ENCODE measurements at regions of chr10 and their contacts with region 1.

Region 1: DNA sequence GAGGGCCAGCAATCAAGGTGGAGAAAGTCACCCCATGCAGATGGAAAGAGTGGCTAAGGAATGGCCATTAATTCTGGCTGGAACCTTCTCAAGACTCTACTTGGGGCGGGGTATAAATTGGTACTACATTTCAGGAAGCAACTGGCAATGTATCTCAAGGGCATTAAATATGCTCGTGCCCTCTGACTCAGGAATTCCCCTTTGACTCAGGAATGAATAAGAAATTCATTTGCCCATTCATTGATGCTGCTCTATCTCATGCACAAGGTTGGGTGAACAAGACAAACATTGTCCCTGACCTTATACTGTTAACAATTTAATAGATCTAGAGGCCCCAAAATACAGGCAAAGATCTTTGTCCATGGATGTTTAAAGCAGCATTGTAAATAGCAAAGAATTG is 188.1 kb downstream of the MYOF start:
- DNase-seq: peak; percentile 60
- H3K4me3 ChIP-seq: no peak overlapping the region
- H3K27ac ChIP-seq: no peak overlapping the region
- H3K4me1 ChIP-seq: peaks cover 8% of the 10 kb centered on the region
- H3K27me3 ChIP-seq: no peaks in the 10 kb centered on the region
- CTCF ChIP-seq: no peak

Region 2: DNA sequence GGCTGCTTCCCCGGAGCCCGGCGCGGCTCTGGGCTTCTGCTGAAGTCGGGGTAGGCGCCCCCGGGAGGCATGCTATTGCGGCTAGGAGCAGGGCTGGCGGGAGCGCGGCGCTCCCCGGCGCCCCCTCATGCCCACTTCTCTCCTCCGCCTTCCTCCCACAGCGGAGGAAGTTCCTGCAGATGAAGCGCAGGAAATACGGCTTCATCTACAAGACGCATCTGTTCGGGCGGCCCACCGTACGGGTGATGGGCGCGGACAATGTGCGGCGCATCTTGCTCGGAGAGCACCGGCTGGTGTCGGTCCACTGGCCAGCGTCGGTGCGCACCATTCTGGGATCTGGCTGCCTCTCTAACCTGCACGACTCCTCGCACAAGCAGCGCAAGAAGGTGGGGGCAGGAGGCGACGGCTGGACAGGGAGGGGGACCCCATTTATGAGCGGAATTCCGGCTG is 219.8 kb before region 1 on chr10:
- CTCF ChIA-PET with region 1: no interaction called
- dilution Hi-C with region 1: loop called (anchors 10 kb)
- in situ Hi-C with region 1: loop called in 1 of 2 experiments (anchors 5 kb)
- intact Hi-C with region 1: no loop called
- DNase-seq: no peak
- H3K4me3 ChIP-seq: peak overlapping the region in 1 of 3 experiments; percentile 31
- H3K27ac ChIP-seq: no peak overlapping the region
- H3K4me1 ChIP-seq: peaks cover 33% of the 10 kb centered on the region
- H3K27me3 ChIP-seq: peaks cover 38% of the 10 kb centered on the region
- CTCF ChIP-seq: no peak

Measured in mammary epithelial cell (primary cell).